Ovary (tissue), 10 donors: ENCODE measurements at regions of chr4 and their contacts with region 1.

Region 1: GRCh38 chr4:182297659-182298058 is 54.5 kb downstream of the TENM3 start:
- DNase-seq: no peak
- H3K4me3 ChIP-seq: no peak overlapping the region
- H3K27ac ChIP-seq: no peak overlapping the region
- H3K4me1 ChIP-seq: no peaks in the 10 kb centered on the region
- H3K27me3 ChIP-seq: no peaks in the 10 kb centered on the region
- CTCF ChIP-seq: no peak
- EP300 ChIP-seq: no peak
- POLR2A ChIP-seq: no peak

Region 2: GRCh38 chr4:182533964-182534363 is 236.3 kb after region 1 on chr4:
- intact Hi-C with region 1: no loop called
- DNase-seq: no peak
- H3K4me3 ChIP-seq: no peak overlapping the region
- H3K27ac ChIP-seq: no peak overlapping the region
- H3K4me1 ChIP-seq: no peaks in the 10 kb centered on the region
- H3K27me3 ChIP-seq: no peaks in the 10 kb centered on the region
- CTCF ChIP-seq: no peak
- EP300 ChIP-seq: no peak
- POLR2A ChIP-seq: no peak

Region 3: GRCh38 chr4:183618681-183619080 is 1321.0 kb after region 1 on chr4:
- intact Hi-C with region 1: loop called in 1 of 4 experiments (anchors 5 kb)
- DNase-seq: peak in 1 of 5 donors; percentile 72
- H3K4me3 ChIP-seq: no peak overlapping the region
- H3K27ac ChIP-seq: peak overlapping the region in 1 of 2 donors; percentile 79
- H3K4me1 ChIP-seq: peaks cover 18% of the 10 kb centered on the region
- H3K27me3 ChIP-seq: no peaks in the 10 kb centered on the region
- CTCF ChIP-seq: no peak
- EP300 ChIP-seq: no peak
- POLR2A ChIP-seq: no peak